Ascending aorta (tissue), 2 donors: ENCODE measurements at regions of chr3 and their contacts with region 1.

Region 1: DNA sequence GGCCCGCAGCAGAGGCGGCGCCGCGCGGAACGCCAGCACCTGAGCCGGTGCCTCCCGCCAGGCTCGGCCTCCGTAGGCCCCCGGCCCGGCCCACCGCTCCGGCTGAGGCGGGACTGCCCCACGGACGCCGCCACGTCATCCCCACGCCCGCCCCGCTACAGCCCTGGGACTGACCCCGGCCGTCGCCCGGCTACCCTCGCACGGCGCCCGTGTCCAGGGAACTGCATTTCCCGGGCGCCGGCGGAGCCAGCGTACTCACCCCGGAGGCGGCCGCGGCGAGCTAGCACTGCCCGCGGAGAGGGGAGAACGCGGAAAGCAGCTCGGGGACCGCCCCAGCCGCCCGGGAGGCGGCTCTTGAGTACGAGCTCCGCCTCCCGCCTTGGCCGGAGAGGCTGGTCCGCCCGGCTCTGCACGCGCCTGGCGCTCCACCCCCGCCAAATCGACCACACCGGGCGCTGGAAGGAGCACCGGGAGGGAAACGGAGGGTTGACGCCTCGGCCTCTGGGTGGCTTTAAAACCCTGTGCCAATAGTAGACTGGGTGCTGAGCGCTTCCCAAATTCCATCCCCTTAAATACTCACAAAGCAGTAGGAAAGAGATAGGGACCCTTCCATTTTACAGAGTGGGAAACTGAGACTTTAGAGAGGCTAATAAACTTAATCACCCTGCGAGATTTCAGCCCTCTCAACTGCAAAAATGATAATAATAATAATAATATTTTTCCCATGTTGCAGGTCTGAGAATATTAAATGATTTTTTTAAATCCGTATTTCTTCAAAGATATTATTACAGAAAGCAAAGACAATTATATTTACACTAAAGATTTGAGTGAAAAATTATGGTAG is at the start of gene B4GALT4:
- DNase-seq: peak; percentile 52 to 92
- H3K4me3 ChIP-seq: peak within 1 kb of the TSS; percentile 80 to 86
- H3K27ac ChIP-seq: peak within 1 kb of the TSS; percentile 92 to 96
- H3K4me1 ChIP-seq: peaks cover 5 to 6% of the 10 kb centered on the region in 2 donors
- H3K27me3 ChIP-seq: no peaks in the 10 kb centered on the region
- CTCF ChIP-seq: no peak
- total RNA-seq, gene B4GALT4: 6.4 TPM

Region 2: GRCh38 chr3:118884748-118885206 is 356.0 kb before region 1 on chr3:
- intact Hi-C with region 1: loop called (anchors 2 kb)
- DNase-seq: peak in 1 of 2 donors; percentile 72
- H3K4me3 ChIP-seq: no peak overlapping the region
- H3K27ac ChIP-seq: no peak overlapping the region
- H3K4me1 ChIP-seq: no peaks in the 10 kb centered on the region
- H3K27me3 ChIP-seq: no peaks in the 10 kb centered on the region
- CTCF ChIP-seq: peak; percentile 20 to 77 (median 65)

Region 3: GRCh38 chr3:119293871-119294695 is 53.3 kb after region 1 on chr3 and contains the start of gene ARHGAP31:
- intact Hi-C with region 1: loop called (anchors 1 kb)
- DNase-seq: peak in 1 of 2 donors; percentile 83
- H3K4me3 ChIP-seq: peak within 1 kb of the TSS; percentile 78 to 80
- H3K27ac ChIP-seq: peak within 1 kb of the TSS; percentile 94 to 96
- H3K4me1 ChIP-seq: peaks cover 6 to 18% of the 10 kb centered on the region in 2 donors
- H3K27me3 ChIP-seq: no peaks in the 10 kb centered on the region
- CTCF ChIP-seq: no peak
- total RNA-seq, gene ARHGAP31: 31.4 TPM

Region 4: DNA sequence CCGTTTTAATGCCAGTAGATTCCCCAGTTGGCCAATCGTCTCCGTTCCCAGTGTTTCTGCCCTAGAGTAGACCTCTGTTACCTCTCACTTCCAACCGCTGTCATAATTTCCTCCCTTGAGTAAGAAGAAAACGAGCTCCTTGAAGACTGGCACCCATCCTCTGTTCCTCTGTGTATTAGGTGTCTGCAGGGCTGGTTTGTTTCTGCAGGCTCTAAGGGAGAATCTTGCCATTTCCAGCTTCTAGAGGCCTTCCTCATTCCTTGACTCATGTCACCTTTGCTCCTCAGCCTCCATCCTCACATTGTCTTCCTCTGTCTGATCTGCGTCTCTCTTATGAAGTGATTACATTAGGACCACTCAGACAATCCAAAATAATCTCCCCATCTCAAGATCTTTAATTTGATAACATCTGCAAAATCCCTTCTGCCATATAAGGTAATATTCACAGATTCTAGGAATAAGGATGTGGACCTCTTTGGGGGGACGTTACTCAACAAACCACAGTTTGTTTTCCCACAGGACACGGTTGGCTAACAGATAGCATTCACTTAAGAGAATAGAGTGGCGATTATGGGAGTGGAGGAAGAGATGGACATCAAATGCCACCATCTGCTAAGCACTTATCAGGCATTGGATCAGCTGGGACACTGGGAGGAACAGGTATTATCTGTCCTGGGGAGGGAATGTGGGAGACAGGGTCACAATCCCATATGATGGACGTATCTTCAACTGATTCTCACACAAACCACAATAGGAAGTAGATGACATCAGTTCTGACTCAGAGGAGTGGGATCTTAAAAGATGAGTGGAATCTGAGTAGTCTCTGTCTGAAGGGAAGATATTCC is 70.5 kb after region 1 on chr3:
- intact Hi-C with region 1: no loop called
- DNase-seq: no peak
- H3K4me3 ChIP-seq: no peak overlapping the region
- H3K27ac ChIP-seq: no peak overlapping the region
- H3K4me1 ChIP-seq: no peaks in the 10 kb centered on the region
- H3K27me3 ChIP-seq: no peaks in the 10 kb centered on the region
- CTCF ChIP-seq: no peak

Region 5: GRCh38 chr3:119322835-119323722 is 82.3 kb after region 1 on chr3:
- intact Hi-C with region 1: loop called (anchors 2 kb)
- DNase-seq: peak; percentile 62 to 94
- H3K4me3 ChIP-seq: peak overlapping the region; percentile 67 to 83
- H3K27ac ChIP-seq: peak overlapping the region; percentile 97 to 99
- H3K4me1 ChIP-seq: peaks cover 0 to 5% of the 10 kb centered on the region in 2 donors
- H3K27me3 ChIP-seq: no peaks in the 10 kb centered on the region
- CTCF ChIP-seq: peak in 2 of 3 experiments; percentile 5 to 35

Region 6: DNA sequence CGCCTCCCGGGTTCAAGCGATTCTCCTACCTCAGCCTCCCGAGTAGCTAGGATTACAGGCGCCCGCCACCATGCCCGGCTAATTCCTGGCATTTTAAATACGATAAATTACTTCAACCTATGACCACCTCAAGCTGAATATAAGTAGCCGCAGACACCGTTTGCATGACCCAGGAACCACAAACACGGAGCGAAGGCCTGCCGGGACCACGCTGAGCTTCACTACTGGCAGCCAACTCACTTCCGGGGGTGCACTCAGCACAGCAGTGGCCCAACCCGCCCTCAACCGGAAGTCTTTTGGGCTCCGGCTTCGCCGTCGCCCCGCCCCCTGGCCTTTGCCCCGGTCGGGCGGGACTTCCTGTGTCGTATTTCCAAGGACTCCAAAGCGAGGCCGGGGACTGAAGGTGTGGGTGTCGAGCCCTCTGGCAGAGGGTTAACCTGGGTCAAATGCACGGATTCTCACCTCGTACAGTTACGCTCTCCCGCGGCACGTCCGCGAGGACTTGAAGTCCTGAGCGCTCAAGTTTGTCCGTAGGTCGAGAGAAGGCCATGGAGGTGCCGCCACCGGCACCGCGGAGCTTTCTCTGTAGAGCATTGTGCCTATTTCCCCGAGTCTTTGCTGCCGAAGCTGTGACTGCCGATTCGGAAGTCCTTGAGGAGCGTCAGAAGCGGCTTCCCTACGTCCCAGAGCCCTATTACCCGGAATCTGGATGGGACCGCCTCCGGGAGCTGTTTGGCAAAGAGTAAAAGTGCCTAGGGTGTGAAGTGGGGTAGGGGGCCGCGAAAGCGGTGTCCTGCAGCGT is 257.6 kb after region 1 on chr3 and contains the start of gene TIMMDC1:
- intact Hi-C with region 1: loop called (anchors 2 kb)
- DNase-seq: peak; percentile 90 to 98
- H3K4me3 ChIP-seq: peak within 1 kb of the TSS; percentile 78 to 92
- H3K27ac ChIP-seq: peak within 1 kb of the TSS; percentile 93 to 94
- H3K4me1 ChIP-seq: peaks cover 5 to 24% of the 10 kb centered on the region in 2 donors
- H3K27me3 ChIP-seq: no peaks in the 10 kb centered on the region
- CTCF ChIP-seq: no peak
- total RNA-seq, gene TIMMDC1: 31.1 TPM

Region 7: DNA sequence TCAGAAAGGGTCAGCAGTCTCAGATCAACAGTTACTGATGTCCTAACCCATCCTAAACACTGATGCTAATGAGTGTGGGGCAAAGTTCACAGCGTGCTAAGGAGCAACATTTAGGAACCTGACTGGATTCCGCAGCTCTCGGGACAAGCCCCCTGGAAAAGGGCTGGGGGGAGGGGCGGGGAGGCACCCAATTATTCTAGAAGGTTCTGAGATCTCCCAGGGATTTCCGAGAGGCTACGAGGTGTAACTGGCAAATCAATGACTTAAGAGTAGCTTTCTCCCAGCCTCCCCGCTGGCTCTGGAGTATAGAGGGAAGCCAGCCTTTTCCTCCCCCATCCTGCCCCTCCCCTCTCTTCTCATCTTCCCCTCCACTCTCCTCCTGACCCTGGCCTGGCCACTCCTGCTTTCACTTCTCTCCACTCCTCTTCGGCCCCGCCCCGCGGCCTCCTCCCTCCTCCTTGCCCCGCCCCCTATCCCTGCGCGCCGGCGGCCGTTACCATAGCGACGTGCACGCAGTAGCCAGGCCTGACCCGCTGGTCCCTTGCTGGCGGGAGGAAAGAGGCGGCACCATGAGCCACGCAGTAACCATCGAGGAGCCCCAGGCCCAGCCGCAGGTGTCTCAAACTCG is 461.8 kb after region 1 on chr3 and contains the start of gene CFAP91:
- intact Hi-C with region 1: loop called (anchors 10 kb)
- DNase-seq: peak; percentile 93 to 99
- H3K4me3 ChIP-seq: peak within 1 kb of the TSS; percentile 54 to 73
- H3K27ac ChIP-seq: peak within 1 kb of the TSS; percentile 65
- H3K4me1 ChIP-seq: peaks cover 0 to 5% of the 10 kb centered on the region in 2 donors
- H3K27me3 ChIP-seq: no peaks in the 10 kb centered on the region
- CTCF ChIP-seq: no peak
- total RNA-seq, gene CFAP91: 3.5 TPM